ENCODE measurements at regions of chr1 and their contacts with region 1.

Region 1: GRCh38 chr1:211335522-211336157 is 9.0 kb downstream of the TRAF5 start:
- DNase-seq: no peak
- ATAC-seq: peak; percentile 86
- H3K4me3 Mint-ChIP-seq: peak overlapping the region; percentile 70
- H3K27ac Mint-ChIP-seq: peak overlapping the region; percentile 88
- H3K4me1 Mint-ChIP-seq: peaks cover 100% of the 10 kb centered on the region
- H3K27me3 Mint-ChIP-seq: no peaks in the 10 kb centered on the region
- CTCF ChIP-seq: no peak

Region 2: GRCh38 chr1:211347077-211347844 is 11.6 kb after region 1 on chr1:
- CTCF ChIA-PET with region 1: interaction called, 4 read pairs
- POLR2A ChIA-PET with region 1: interaction called, 6 read pairs
- intact Hi-C with region 1: loop called (anchors 1 kb)
- DNase-seq: no peak
- ATAC-seq: no peak
- H3K4me3 Mint-ChIP-seq: no peak overlapping the region
- H3K27ac Mint-ChIP-seq: peak overlapping the region; percentile 30
- H3K4me1 Mint-ChIP-seq: peaks cover 87% of the 10 kb centered on the region
- H3K27me3 Mint-ChIP-seq: no peaks in the 10 kb centered on the region
- CTCF ChIP-seq: no peak

Region 3: DNA sequence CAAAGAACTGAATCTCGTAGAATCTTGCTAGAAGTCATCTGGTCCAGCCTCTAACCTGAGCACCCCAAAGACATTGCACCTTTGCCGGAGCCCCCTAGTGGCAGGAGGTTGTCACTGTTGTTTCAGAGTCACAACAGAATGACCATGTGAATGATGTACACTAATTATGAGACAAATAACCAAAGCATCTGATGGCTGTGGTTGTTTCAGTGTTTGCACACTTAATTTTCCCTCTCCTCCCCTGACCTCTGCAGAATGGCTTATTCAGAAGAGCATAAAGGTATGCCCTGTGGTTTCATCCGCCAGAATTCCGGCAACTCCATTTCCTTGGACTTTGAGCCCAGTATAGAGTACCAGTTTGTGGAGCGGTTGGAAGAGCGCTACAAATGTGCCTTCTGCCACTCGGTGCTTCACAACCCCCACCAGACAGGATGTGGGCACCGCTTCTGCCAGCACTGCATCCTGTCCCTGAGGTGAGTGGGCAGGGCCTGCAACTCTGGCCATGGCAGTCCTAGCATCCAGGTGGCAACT is 17.4 kb after region 1 on chr1:
- CTCF ChIA-PET with region 1: interaction called, 15 read pairs
- POLR2A ChIA-PET with region 1: interaction called, 6 read pairs
- intact Hi-C with region 1: loop called (anchors 2 kb)
- DNase-seq: no peak
- ATAC-seq: peak; percentile 83
- H3K4me3 Mint-ChIP-seq: peak overlapping the region; percentile 55
- H3K27ac Mint-ChIP-seq: peak overlapping the region; percentile 94
- H3K4me1 Mint-ChIP-seq: peaks cover 60% of the 10 kb centered on the region
- H3K27me3 Mint-ChIP-seq: no peaks in the 10 kb centered on the region
- CTCF ChIP-seq: no peak

Region 4: GRCh38 chr1:213315571-213315970 is 1979.9 kb after region 1 on chr1:
- CTCF ChIA-PET with region 1: no interaction called
- POLR2A ChIA-PET with region 1: no interaction called
- intact Hi-C with region 1: no loop called
- DNase-seq: no peak
- ATAC-seq: no peak
- H3K4me3 Mint-ChIP-seq: no peak overlapping the region
- H3K27ac Mint-ChIP-seq: no peak overlapping the region
- H3K4me1 Mint-ChIP-seq: no peaks in the 10 kb centered on the region
- H3K27me3 Mint-ChIP-seq: peaks cover 2% of the 10 kb centered on the region
- CTCF ChIP-seq: no peak